K562 (cell line): ENCODE measurements at regions of chr11 and their contacts with region 1.

Region 1: GRCh38 chr11:76207642-76208401 is 1.5 kb upstream of the WNT11 start:
- DNase-seq: peak; percentile 87 to 92 (median 90)
- ATAC-seq: peak; percentile 90
- H3K4me3 ChIP-seq: peak overlapping the region; percentile 46
- H3K27ac ChIP-seq: no peak overlapping the region
- H3K4me1 ChIP-seq: peaks cover 18 to 59% of the 10 kb centered on the region in 2 experiments; a peak in 4 of 5 replicates
- H3K27me3 ChIP-seq: peaks cover 0 to 29% of the 10 kb centered on the region in 2 experiments; a peak in 2 of 5 replicates
- CTCF ChIP-seq: peak; percentile 92 to 94 (median 93)
- EP300 ChIP-seq: no peak
- POLR2A ChIP-seq: no peak
- RAD21 ChIP-seq: peak; percentile 93 to 95

Region 2: DNA sequence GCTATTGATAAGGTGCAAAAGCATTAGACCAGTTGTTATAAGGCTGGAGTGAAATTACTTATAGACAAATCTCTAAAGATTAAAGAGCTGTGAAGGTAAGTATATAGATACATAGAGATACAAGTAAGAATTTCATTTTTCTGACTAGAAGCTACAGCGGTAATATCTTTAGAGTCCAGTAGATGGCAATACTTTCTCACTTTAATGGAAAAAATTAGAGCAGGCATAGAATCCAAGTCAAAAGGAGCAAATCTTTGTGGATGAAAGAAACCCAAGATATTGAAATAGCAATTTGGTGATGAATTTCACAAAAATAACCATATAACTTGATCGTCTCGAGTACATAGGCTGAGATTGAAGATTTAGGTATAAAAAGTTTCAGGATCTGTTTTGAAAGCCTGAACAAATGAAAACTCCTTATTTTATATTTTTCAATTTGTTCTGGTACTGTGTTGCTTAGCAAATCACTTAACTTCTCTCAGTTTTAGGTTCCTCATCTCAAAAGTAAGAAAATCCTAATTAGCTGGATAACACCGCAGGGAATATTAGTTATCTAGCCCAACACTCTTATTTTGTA is 310.9 kb before region 1 on chr11:
- CTCF ChIA-PET with region 1: interaction called, 3 read pairs
- POLR2A ChIA-PET with region 1: no interaction called
- in situ Hi-C with region 1: no loop called
- intact Hi-C with region 1: loop called (anchors 2 kb)
- DNase-seq: peak; percentile 22 to 42 (median 29)
- ATAC-seq: peak; percentile 68; the same call in 2 of the 3 replicates
- H3K4me3 ChIP-seq: no peak overlapping the region
- H3K27ac ChIP-seq: no peak overlapping the region
- H3K4me1 ChIP-seq: no peaks in the 10 kb centered on the region
- H3K27me3 ChIP-seq: no peaks in the 10 kb centered on the region
- CTCF ChIP-seq: peak; percentile 45 to 85 (median 48); a peak in 4 of 6 replicates
- EP300 ChIP-seq: no peak
- POLR2A ChIP-seq: no peak
- RAD21 ChIP-seq: peak; percentile 86 to 87

Region 3: DNA sequence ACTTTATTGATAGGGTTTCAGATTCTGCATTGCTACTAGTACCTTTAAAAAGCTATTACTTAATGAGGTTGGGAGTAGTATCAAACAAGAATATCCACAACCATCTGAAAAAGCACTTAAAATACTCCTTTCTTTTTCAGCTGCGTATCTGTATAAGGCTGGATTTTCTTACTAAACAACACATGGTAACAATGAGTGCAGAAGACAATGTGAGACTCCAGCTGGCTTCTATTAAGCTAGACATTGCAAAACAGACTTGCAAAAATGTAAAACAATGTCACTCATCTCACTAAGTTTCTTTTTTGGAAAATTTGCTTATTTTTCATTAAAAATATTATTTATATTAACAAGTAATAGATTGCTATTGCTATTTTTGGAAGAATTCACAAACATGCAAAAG is 134.1 kb before region 1 on chr11:
- CTCF ChIA-PET with region 1: no interaction called
- POLR2A ChIA-PET with region 1: no interaction called
- in situ Hi-C with region 1: no loop called
- intact Hi-C with region 1: no loop called
- DNase-seq: no peak
- ATAC-seq: no peak
- H3K4me3 ChIP-seq: no peak overlapping the region
- H3K27ac ChIP-seq: peak overlapping the region; percentile 79; the same call in 2 of the 3 replicates
- H3K4me1 ChIP-seq: peaks cover 5 to 10% of the 10 kb centered on the region in 2 experiments; a peak in 2 of 5 replicates
- H3K27me3 ChIP-seq: no peaks in the 10 kb centered on the region
- CTCF ChIP-seq: no peak
- EP300 ChIP-seq: no peak
- POLR2A ChIP-seq: no peak
- RAD21 ChIP-seq: no peak